ENCODE measurements at regions of chr13 and their contacts with region 1.

Region 1: GRCh38 chr13:102555917-102556553 is 40.8 kb upstream of the TPP2 start:
- DNase-seq: peak; percentile 26
- ATAC-seq: peak; percentile 75
- H3K4me3 ChIP-seq: no peak overlapping the region
- H3K27ac ChIP-seq: no peak overlapping the region
- H3K4me1 ChIP-seq: no peaks in the 10 kb centered on the region
- H3K27me3 ChIP-seq: no peaks in the 10 kb centered on the region
- CTCF ChIP-seq: peak; percentile 47
- POLR2A ChIP-seq: no peak
- RAD21 ChIP-seq: peak; percentile 51

Region 2: GRCh38 chr13:101942038-101942437 is 614.0 kb before region 1 on chr13:
- CTCF ChIA-PET with region 1: interaction called, 4 read pairs
- POLR2A ChIA-PET with region 1: no interaction called
- dilution Hi-C with region 1: no loop called
- in situ Hi-C with region 1: no loop called
- intact Hi-C with region 1: loop called (anchors 2 kb)
- DNase-seq: peak; percentile 16
- ATAC-seq: peak; percentile 77; the same call in 1 of the 2 replicates
- H3K4me3 ChIP-seq: no peak overlapping the region
- H3K27ac ChIP-seq: no peak overlapping the region
- H3K4me1 ChIP-seq: no peaks in the 10 kb centered on the region
- H3K27me3 ChIP-seq: no peaks in the 10 kb centered on the region
- CTCF ChIP-seq: peak; percentile 56
- POLR2A ChIP-seq: no peak
- RAD21 ChIP-seq: peak; percentile 55

Region 3: DNA sequence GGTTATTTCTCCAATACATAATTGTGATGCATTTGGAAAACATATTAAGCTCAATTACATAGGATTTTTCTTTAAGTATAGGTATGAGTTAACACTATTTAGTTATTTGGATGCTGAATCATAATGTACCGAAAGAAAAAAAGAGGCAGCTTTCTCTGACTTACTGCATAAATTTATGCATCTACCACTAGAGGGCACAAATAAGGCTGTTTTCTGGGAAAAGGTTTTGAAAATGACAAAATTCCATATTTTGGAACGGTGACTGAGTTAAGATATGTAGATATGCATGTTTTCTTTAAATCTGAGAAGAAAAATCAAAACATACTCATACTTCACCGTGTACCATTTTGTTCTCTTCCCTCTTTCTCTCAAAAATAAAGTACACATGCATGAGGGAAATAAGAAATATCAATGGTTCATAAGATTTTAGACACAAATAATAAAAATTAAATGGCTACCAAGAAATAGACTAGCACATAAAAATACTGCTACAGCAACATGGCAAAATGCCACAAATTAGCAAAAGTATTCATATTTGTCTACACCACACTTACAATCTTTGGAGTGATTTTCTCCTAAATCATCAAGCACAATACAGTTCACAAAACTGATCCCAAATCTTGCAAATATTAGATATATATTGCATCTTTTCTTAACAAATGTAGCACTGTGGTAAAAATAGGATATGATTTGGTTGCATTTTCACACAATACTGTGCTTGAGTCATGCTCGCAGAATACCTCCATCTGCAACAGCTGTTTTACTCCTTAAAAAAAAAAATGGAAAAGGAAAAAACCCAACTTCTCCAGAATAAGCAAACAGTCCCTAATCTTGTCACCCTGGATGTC is 414.2 kb before region 1 on chr13:
- CTCF ChIA-PET with region 1: interaction called, 11 read pairs
- POLR2A ChIA-PET with region 1: no interaction called
- dilution Hi-C with region 1: no loop called
- in situ Hi-C with region 1: no loop called
- intact Hi-C with region 1: loop called (anchors 1 kb)
- DNase-seq: peak; percentile 35
- ATAC-seq: peak; percentile 53
- H3K4me3 ChIP-seq: no peak overlapping the region
- H3K27ac ChIP-seq: no peak overlapping the region
- H3K4me1 ChIP-seq: no peaks in the 10 kb centered on the region
- H3K27me3 ChIP-seq: no peaks in the 10 kb centered on the region
- CTCF ChIP-seq: peak; percentile 72
- POLR2A ChIP-seq: no peak
- RAD21 ChIP-seq: peak; percentile 59

Region 4: GRCh38 chr13:102197193-102197592 is 358.8 kb before region 1 on chr13:
- CTCF ChIA-PET with region 1: no interaction called
- POLR2A ChIA-PET with region 1: no interaction called
- dilution Hi-C with region 1: no loop called
- in situ Hi-C with region 1: no loop called
- intact Hi-C with region 1: loop called (anchors 5 kb)
- DNase-seq: peak; percentile 8
- ATAC-seq: no peak
- H3K4me3 ChIP-seq: no peak overlapping the region
- H3K27ac ChIP-seq: no peak overlapping the region
- H3K4me1 ChIP-seq: peaks cover 4% of the 10 kb centered on the region; the same call in 1 of the 2 replicates
- H3K27me3 ChIP-seq: no peaks in the 10 kb centered on the region
- CTCF ChIP-seq: peak; percentile 23
- POLR2A ChIP-seq: no peak
- RAD21 ChIP-seq: peak; percentile 32; the same call in 1 of the 2 replicates

Region 5: GRCh38 chr13:102452831-102453230 is 103.2 kb before region 1 on chr13:
- CTCF ChIA-PET with region 1: no interaction called
- POLR2A ChIA-PET with region 1: no interaction called
- dilution Hi-C with region 1: no loop called
- in situ Hi-C with region 1: no loop called
- intact Hi-C with region 1: no loop called
- DNase-seq: peak; percentile 16
- ATAC-seq: no peak
- H3K4me3 ChIP-seq: no peak overlapping the region
- H3K27ac ChIP-seq: no peak overlapping the region
- H3K4me1 ChIP-seq: no peaks in the 10 kb centered on the region
- H3K27me3 ChIP-seq: no peaks in the 10 kb centered on the region; the same call in 1 of the 2 replicates
- CTCF ChIP-seq: no peak
- POLR2A ChIP-seq: no peak
- RAD21 ChIP-seq: no peak

Region 6: DNA sequence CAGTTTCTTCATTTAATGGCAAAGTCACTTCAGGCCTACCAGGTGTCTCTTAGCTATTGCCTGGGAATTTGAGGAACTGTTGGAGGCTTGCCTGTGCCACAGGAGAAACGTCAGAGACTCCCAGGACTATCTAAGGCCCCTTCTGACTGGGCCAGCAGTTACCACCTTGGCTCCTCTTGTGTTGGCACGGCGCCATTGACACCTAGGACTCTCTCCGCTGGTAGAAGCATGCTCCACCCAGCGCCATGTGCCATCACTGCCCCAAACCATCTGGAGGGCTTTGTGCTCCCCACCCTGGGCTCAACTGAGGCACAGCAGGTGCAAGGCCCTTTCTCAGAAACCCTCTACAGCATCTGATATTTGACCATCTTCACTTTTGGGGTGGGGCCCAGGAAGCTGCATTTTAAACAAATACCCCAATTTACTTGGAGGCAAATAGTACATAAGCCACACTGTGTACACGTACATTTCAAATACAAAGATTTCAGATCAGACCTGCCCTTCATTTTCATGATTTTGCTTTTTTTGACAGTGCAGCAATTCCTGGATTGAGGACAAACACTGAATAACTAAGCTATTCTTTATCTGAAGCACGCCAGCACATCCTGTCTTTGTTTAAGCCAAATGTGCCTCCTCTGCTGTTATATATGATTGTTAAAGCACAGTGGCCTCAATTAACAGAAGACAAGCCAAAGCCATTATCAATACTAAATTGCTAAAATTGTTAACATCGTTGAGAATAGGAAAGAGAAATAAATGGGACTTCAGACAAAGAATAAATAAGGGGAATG is 19.1 kb before region 1 on chr13:
- CTCF ChIA-PET with region 1: interaction called, 11 read pairs
- POLR2A ChIA-PET with region 1: no interaction called
- dilution Hi-C with region 1: no loop called
- in situ Hi-C with region 1: no loop called
- intact Hi-C with region 1: no loop called
- DNase-seq: no peak
- ATAC-seq: no peak
- H3K4me3 ChIP-seq: no peak overlapping the region
- H3K27ac ChIP-seq: no peak overlapping the region
- H3K4me1 ChIP-seq: no peaks in the 10 kb centered on the region
- H3K27me3 ChIP-seq: no peaks in the 10 kb centered on the region
- CTCF ChIP-seq: no peak
- POLR2A ChIP-seq: no peak
- RAD21 ChIP-seq: no peak